ENCODE measurements at regions of chr11 and their contacts with region 1.

Region 1: GRCh38 chr11:60700689-60701480 is 1.5 kb downstream of the MS4A8 start:
- DNase-seq: no peak
- ATAC-seq: no peak
- H3K4me3 Mint-ChIP-seq: no peak overlapping the region
- H3K27ac Mint-ChIP-seq: no peak overlapping the region
- H3K4me1 Mint-ChIP-seq: no peaks in the 10 kb centered on the region
- H3K27me3 Mint-ChIP-seq: no peaks in the 10 kb centered on the region
- CTCF ChIP-seq: no peak

Region 2: DNA sequence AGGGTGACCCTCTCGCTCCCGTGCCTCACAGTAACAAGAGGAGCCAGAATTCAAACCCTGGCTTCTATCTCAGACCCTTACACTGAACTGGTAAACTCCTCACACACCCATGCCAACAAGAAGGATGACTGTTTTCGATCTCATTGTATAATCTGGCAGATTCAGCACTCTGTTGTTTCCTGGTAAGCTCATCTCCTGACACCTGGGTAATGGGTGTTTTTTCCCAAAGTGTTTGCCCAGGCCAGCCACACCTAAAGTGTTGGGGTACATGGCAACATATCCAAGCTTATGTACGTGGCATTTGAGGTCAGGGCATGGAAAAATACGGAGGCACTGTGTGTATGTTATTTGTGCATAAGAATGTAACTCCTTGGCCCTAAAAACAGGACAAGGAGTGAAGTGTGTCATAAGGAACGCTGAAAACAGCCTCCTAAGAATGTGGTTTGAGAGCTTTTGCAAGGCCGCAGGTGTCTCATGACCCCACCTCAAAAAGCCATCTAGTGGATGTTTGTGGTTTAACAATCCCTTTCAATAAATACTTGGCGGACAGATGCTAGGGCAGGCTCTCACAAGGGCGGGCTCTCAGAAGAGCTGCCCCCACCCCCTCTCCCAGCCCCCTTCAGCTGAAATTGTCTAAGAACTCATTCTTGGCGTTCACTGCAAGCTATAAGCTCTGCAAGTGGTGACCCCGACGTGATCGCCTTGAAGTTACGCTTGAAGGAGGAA is 55.6 kb after region 1 on chr11 and contains the start of gene MS4A15:
- CTCF ChIA-PET with region 1: no interaction called
- POLR2A ChIA-PET with region 1: no interaction called
- intact Hi-C with region 1: loop called (anchors 10 kb)
- DNase-seq: no peak
- ATAC-seq: peak; percentile 50
- H3K4me3 Mint-ChIP-seq: no peak within 1 kb of the TSS
- H3K27ac Mint-ChIP-seq: no peak within 1 kb of the TSS
- H3K4me1 Mint-ChIP-seq: peaks cover 18% of the 10 kb centered on the region
- H3K27me3 Mint-ChIP-seq: peaks cover 29% of the 10 kb centered on the region
- CTCF ChIP-seq: no peak
- total RNA-seq, gene MS4A15: not detected in 2 replicates

Region 3: DNA sequence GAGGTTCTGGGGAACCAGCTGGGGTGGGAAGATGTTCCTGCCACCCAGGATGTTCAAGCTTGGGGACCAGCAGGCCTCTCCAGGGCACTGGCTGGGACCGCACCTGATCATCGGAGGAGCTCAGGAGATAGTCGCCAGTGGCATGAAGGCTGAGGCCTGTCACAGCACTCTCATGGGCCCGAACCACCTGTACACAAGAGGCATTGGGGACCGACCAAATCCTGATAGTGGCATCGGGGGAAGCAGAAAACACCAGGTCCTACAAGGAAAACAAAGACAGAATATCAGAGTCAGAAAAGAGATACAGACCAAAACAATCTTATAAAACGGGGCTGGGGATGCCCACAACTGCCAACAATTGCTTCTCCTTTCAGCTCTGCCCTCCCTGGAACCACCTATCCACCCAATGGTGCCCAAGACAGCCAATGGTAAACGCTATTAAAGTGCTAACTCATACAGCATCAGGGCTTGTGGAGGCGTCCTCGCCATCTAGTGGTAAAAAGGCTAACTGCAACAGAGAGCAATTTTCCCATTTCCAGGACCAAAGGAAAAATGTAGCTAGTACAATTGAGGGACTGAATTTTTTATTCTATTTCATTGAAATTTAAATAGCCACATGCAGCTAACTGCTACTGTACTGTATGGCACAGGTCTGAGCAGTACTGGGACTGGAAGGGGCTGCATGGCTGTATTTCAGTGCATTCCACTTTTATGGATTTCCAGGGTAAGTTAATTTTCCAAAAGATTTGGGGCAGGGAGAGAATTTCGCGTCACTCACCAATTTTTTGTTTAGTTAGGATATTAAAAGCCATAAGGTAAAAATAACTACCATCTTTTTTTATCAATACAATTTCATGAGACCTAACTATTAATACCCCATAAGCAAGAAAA is 198.4 kb after region 1 on chr11:
- CTCF ChIA-PET with region 1: no interaction called
- POLR2A ChIA-PET with region 1: no interaction called
- intact Hi-C with region 1: loop called (anchors 2 kb)
- DNase-seq: no peak
- ATAC-seq: peak; percentile 90
- H3K4me3 Mint-ChIP-seq: no peak overlapping the region
- H3K27ac Mint-ChIP-seq: no peak overlapping the region
- H3K4me1 Mint-ChIP-seq: peaks cover 10% of the 10 kb centered on the region
- H3K27me3 Mint-ChIP-seq: no peaks in the 10 kb centered on the region
- CTCF ChIP-seq: peak; percentile 95